Left ventricle myocardium superior (tissue), 1 donor: ENCODE measurements at regions of chr6 and their contacts with region 1.

Region 1: DNA sequence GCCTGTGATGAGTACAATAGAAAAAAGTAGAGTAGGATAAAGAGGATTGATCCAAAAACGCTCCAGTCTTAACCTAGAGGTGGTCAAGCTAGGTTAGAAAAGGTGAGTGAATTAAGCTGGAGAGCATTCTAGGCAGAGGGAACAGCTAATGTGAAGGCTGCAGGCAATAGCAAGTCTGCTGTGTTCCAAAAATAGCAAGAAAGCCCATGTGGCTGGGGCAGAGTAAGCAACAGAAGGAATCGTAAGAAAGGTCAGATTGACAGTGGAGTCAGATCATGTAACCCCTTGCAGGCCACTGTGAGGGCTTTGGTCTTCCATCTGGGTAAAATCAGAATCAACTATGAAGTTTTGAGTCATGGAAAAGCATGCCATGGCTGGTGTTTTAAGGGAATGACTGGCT is 155.0 kb downstream of the OPN5 start:
- DNase-seq: no peak
- ATAC-seq: peak; percentile 45

Region 2: GRCh38 chr6:48080227-48081009 is 143.6 kb after region 1 on chr6:
- intact Hi-C with region 1: loop called (anchors 5 kb)
- DNase-seq: no peak
- ATAC-seq: no peak

Region 3: GRCh38 chr6:48141961-48142360 is 205.1 kb after region 1 on chr6:
- intact Hi-C with region 1: no loop called
- DNase-seq: no peak
- ATAC-seq: no peak